ENCODE measurements at regions of chr14 and their contacts with region 1.

Region 1: DNA sequence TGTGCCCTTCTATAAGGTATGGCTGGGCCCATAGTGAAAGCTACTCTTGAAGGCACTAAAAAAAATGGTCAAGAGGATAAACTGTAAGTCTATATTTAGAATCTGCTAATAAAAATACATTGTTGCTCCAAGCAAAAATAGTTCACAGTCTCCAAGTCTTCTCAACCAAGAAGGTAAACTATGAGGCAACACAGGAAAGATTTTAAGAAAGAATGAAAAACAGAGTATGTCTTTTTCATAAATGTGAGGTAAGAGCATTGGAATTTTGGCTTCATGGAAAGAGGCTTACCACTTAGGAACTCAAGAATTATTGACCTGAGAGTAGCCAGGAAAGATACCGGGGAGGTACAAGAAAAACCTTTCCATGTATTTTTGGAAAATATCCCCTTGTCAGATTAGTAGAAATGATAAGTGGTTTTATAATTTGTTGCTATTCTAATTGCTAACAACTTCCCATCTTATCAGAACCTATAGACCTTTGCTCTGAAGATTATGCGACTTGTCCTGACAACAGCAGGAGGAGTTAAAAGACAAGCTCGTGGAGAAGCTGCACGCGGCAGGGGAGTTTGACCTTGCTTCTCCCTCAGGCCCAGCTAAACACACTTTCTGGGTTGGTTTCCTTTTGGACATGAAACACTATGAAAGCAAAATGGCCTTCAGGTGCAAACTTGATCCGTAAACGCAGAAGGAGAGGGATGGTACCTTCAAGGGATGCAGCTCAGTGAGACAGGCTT is 238.1 kb downstream of the FOXN3 start:
- DNase-seq: no peak
- ATAC-seq: no peak
- H3K4me3 Mint-ChIP-seq: no peak overlapping the region
- H3K27ac Mint-ChIP-seq: peak overlapping the region; percentile 20
- H3K4me1 Mint-ChIP-seq: peaks cover 10% of the 10 kb centered on the region
- H3K27me3 Mint-ChIP-seq: no peaks in the 10 kb centered on the region

Region 2: GRCh38 chr14:89365061-89365801 is 186.3 kb after region 1 on chr14:
- CTCF ChIA-PET with region 1: no interaction called
- POLR2A ChIA-PET with region 1: no interaction called
- intact Hi-C with region 1: no loop called
- DNase-seq: peak; percentile 72
- ATAC-seq: peak; percentile 92
- H3K4me3 Mint-ChIP-seq: peak overlapping the region; percentile 70
- H3K27ac Mint-ChIP-seq: peak overlapping the region; percentile 97
- H3K4me1 Mint-ChIP-seq: peaks cover 62% of the 10 kb centered on the region
- H3K27me3 Mint-ChIP-seq: no peaks in the 10 kb centered on the region

Region 3: DNA sequence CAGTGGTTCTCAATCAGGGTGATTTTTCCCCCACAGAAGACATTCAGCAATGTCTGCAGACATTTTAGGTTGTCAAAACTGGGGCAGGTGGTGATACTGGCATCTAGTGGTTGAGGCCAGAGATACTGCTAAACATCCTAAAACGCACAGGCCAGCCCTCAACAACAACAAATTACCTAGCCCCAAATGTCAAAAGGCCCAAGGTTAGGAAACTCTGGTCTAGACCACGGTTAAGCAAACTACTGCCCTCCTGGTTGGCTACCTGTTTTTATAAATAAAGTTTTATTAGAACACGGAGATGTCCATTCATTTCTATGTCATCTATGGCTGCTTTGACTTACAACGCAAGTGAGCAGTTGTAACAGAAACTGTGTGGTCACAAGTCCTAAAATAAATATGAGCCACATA is 588.9 kb after region 1 on chr14:
- CTCF ChIA-PET with region 1: no interaction called
- POLR2A ChIA-PET with region 1: no interaction called
- intact Hi-C with region 1: loop called (anchors 1 kb)
- DNase-seq: peak; percentile 78
- ATAC-seq: peak; percentile 95
- H3K4me3 Mint-ChIP-seq: peak overlapping the region; percentile 13
- H3K27ac Mint-ChIP-seq: peak overlapping the region; percentile 82
- H3K4me1 Mint-ChIP-seq: peaks cover 25% of the 10 kb centered on the region
- H3K27me3 Mint-ChIP-seq: peaks cover 2% of the 10 kb centered on the region

Region 4: GRCh38 chr14:89899917-89900663 is 721.1 kb after region 1 on chr14:
- CTCF ChIA-PET with region 1: interaction called, 3 read pairs
- POLR2A ChIA-PET with region 1: no interaction called
- intact Hi-C with region 1: loop called in 1 of 2 experiments (anchors 5 kb)
- DNase-seq: peak; percentile 37
- ATAC-seq: no peak
- H3K4me3 Mint-ChIP-seq: no peak overlapping the region
- H3K27ac Mint-ChIP-seq: no peak overlapping the region
- H3K4me1 Mint-ChIP-seq: peaks cover 14% of the 10 kb centered on the region
- H3K27me3 Mint-ChIP-seq: peaks cover 12% of the 10 kb centered on the region

Region 5: DNA sequence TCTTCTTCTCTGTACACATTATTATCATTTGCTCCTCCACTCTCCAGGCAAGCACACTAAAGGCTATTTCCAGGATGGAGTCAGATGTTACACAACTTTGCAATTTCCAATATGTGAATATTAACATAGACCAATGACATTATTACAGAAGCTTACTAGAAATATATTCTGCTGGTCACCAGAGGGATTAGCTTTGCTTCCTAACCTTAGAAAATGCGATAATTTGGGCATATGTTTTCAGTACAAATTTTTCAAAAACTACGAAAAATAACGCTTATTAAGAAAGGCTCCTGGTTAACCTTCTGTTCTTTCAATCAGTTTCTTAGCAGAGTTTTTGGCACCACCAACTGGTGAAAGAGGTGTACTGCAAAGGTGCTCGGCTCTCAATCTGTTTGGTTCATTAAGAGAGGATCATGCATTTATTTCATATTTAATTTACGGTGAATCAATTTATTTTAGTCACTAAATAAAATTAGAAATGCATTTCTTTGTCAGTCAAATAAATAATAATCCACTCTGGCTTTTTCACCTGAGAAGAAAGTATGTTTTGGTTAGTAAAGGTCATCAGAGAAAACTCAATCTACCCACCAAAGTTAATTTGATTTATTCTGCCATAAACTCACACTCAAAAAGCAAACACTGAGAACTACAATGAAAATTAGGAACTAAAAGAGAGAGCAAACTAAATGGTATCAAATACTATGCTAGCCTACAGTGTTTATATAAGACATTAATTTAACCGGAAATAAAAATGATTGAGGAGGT is 736.3 kb after region 1 on chr14:
- CTCF ChIA-PET with region 1: no interaction called
- POLR2A ChIA-PET with region 1: no interaction called
- intact Hi-C with region 1: loop called in 1 of 2 experiments (anchors 1 kb)
- DNase-seq: peak; percentile 73
- ATAC-seq: no peak
- H3K4me3 Mint-ChIP-seq: no peak overlapping the region
- H3K27ac Mint-ChIP-seq: no peak overlapping the region
- H3K4me1 Mint-ChIP-seq: peaks cover 3% of the 10 kb centered on the region
- H3K27me3 Mint-ChIP-seq: peaks cover 3% of the 10 kb centered on the region